CD4-positive, alpha-beta memory T cell (primary cell): ENCODE measurements at regions of chr19 and their contacts with region 1.

Region 1: GRCh38 chr19:17052439-17053210 is 22.6 kb downstream of the HAUS8 start:
- DNase-seq: peak in 4 of 5 donors; percentile 22 to 42 (median 35)
- H3K4me3 ChIP-seq: no peak overlapping the region
- H3K4me3 Mint-ChIP-seq: no peak overlapping the region
- H3K27ac ChIP-seq: no peak overlapping the region
- H3K27ac Mint-ChIP-seq: peak overlapping the region in 2 of 7 donors; percentile 29 to 46
- H3K4me1 ChIP-seq: no peaks in the 10 kb centered on the region
- H3K4me1 Mint-ChIP-seq: no peaks in the 10 kb centered on the region
- H3K27me3 ChIP-seq: no peaks in the 10 kb centered on the region
- H3K27me3 Mint-ChIP-seq: no peaks in the 10 kb centered on the region

Region 2: GRCh38 chr19:16771618-16772017 is 281.0 kb before region 1 on chr19:
- CTCF ChIA-PET with region 1: interaction called, 45 read pairs
- POLR2A ChIA-PET with region 1: no interaction called
- intact Hi-C with region 1: no loop called
- DNase-seq: peak; percentile 61 to 69 (median 63)
- H3K4me3 ChIP-seq: no peak overlapping the region
- H3K4me3 Mint-ChIP-seq: no peak overlapping the region
- H3K27ac ChIP-seq: no peak overlapping the region
- H3K27ac Mint-ChIP-seq: no peak overlapping the region
- H3K4me1 ChIP-seq: no peaks in the 10 kb centered on the region
- H3K4me1 Mint-ChIP-seq: peaks cover 0 to 2% (median 0%) of the 10 kb centered on the region in 4 donors
- H3K27me3 ChIP-seq: no peaks in the 10 kb centered on the region
- H3K27me3 Mint-ChIP-seq: peaks cover 16 to 18% of the 10 kb centered on the region in 2 donors

Region 3: DNA sequence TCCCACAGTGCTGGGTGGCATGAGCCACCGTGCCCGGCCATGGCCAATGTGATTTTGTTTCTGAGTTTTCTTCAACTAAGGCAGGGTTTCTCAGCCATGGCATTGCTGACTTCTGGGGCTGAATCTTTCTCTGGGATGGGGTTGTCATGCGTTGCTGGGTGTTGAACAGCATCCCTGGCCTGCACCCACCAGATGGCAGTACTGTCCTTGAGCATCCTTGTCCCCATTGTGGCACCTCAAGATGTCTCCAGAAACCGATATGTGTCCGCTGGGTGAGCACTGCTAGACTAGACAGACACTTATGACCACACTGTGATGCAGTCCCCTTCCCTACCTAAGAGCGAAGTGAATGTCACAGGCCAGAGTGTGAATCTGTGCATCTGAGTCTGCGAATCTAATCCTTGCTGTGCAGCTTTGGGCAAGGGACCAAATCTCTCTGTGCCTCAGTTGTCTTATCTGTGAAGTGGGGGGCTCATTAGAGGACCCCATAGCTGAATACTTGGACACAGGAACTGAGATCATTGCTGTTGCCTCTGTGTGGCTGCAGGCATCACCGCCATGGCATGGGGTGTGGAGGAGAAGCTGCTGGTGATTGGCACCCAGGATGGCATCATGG is 273.7 kb before region 1 on chr19:
- CTCF ChIA-PET with region 1: interaction called, 45 read pairs
- POLR2A ChIA-PET with region 1: interaction called, 3 read pairs
- intact Hi-C with region 1: loop called (anchors 2 kb)
- DNase-seq: peak in 4 of 5 donors; percentile 27 to 39 (median 32)
- H3K4me3 ChIP-seq: no peak overlapping the region
- H3K4me3 Mint-ChIP-seq: no peak overlapping the region
- H3K27ac ChIP-seq: no peak overlapping the region
- H3K27ac Mint-ChIP-seq: no peak overlapping the region
- H3K4me1 ChIP-seq: no peaks in the 10 kb centered on the region
- H3K4me1 Mint-ChIP-seq: no peaks in the 10 kb centered on the region
- H3K27me3 ChIP-seq: no peaks in the 10 kb centered on the region
- H3K27me3 Mint-ChIP-seq: peaks cover 5 to 9% of the 10 kb centered on the region in 2 donors

Region 4: GRCh38 chr19:17001603-17002183 is 50.9 kb before region 1 on chr19:
- CTCF ChIA-PET with region 1: no interaction called
- POLR2A ChIA-PET with region 1: no interaction called
- intact Hi-C with region 1: no loop called
- DNase-seq: peak; percentile 84 to 96 (median 96)
- H3K4me3 ChIP-seq: no peak overlapping the region
- H3K4me3 Mint-ChIP-seq: peak overlapping the region; percentile 73 to 94 (median 79)
- H3K27ac ChIP-seq: peak overlapping the region; percentile 63
- H3K27ac Mint-ChIP-seq: peak overlapping the region; percentile 93 to 99 (median 97)
- H3K4me1 ChIP-seq: peaks cover 28% of the 10 kb centered on the region
- H3K4me1 Mint-ChIP-seq: peaks cover 17 to 33% (median 21%) of the 10 kb centered on the region in 4 donors
- H3K27me3 ChIP-seq: no peaks in the 10 kb centered on the region
- H3K27me3 Mint-ChIP-seq: no peaks in the 10 kb centered on the region

Region 5: GRCh38 chr19:17081672-17082630 is 29.3 kb after region 1 on chr19:
- CTCF ChIA-PET with region 1: no interaction called
- POLR2A ChIA-PET with region 1: no interaction called
- intact Hi-C with region 1: no loop called
- DNase-seq: no peak
- H3K4me3 ChIP-seq: no peak overlapping the region
- H3K4me3 Mint-ChIP-seq: peak overlapping the region in 1 of 8 donors; percentile 2
- H3K27ac ChIP-seq: no peak overlapping the region
- H3K27ac Mint-ChIP-seq: peak overlapping the region in 3 of 7 donors; percentile 17 to 61 (median 41)
- H3K4me1 ChIP-seq: peaks cover 45% of the 10 kb centered on the region
- H3K4me1 Mint-ChIP-seq: peaks cover 35 to 74% (median 47%) of the 10 kb centered on the region in 4 donors
- H3K27me3 ChIP-seq: no peaks in the 10 kb centered on the region
- H3K27me3 Mint-ChIP-seq: no peaks in the 10 kb centered on the region